ENCODE measurements at regions of chr3 and their contacts with region 1.

Region 1: DNA sequence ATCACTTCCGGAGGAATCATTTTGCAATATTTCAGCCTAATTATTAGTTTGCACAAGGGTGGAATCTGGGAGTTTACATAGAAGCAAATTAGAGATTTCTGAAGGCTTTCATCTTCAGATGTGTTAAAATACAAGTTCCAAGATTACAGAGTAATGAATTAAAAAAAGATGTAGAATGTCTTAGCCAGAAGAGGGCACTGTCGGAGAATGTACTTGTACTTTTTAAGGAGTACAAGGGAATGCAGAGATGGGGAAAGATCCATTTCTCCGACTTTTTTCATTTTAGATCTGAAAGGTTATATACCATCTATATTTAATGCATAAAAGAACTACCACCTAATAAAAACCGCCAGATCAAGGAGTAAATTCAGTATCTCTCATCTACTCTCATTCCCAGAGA is 43.1 kb upstream of the WDR5B start:
- DNase-seq: peak; percentile 61
- H3K4me3 ChIP-seq: no peak overlapping the region
- CTCF ChIP-seq: peak; percentile 40

Region 2: DNA sequence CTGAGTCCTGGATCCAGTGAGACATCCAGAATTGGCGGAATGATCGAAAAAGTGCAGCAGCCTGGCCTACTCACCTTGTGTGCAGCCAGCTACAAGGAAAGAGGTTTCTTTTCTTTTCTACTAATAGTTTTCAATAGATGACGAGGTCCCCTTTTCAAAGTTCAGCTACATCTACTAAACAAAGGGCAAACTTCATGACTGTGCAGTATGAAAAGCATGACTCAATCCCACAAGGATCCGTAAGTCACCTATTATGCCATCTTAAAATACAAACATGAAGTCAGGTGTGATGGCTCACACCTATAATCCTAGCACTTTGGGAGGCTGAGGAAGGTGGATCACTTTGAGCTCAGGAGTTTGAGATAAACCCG is 92.6 kb before region 1 on chr3:
- in situ Hi-C with region 1: no loop called
- DNase-seq: no peak
- H3K4me3 ChIP-seq: no peak overlapping the region
- CTCF ChIP-seq: no peak

Region 3: GRCh38 chr3:122392868-122393844 is 65.8 kb before region 1 on chr3:
- in situ Hi-C with region 1: no loop called
- DNase-seq: peak; percentile 32
- H3K4me3 ChIP-seq: no peak overlapping the region
- CTCF ChIP-seq: peak; percentile 70

Region 4: DNA sequence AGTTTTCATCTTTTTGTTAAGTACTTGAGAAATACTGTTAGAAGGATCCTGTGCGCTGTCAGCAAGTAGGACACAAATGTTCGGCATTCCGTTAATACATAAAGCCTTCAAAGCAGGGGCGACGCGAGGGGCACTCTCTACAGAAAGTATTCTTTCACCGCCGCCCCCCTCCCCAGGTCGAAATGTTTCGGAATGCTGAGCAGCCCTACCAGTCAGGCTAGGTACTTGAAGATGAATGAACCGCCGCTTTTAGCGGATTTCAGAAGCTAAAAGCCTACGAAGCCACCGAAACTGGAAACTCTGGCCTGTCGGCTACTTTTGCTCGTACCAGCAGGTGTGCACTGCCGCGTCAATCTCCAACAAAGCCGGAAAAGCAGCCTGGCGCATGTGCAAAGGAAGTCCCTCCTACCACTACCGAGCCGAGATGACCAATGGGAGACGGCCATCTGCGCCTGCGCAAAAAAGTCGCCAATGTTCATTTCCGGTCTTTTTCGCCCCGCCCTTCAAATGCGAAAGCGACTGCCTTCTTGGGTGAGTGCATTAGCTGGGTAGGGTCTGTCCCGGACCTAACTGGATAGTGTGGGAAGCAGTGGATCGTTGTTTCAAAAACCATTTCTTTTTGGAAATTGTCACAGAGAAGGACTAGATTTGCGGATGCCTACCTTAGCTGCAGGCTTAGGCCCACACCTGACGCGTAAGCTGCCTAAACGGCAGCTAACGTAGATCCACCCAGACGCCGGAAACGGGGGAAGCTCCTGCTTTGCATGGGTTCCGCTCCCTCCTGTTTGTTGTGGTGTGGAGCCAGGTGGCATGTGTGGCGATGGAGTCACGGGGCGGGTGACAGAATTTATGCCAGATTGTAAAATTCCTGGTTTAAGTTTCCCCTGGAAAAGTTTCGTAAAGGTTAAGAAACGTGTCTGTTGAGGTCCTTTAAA is 43.0 kb before region 1 on chr3 and contains the start of gene WDR5B:
- in situ Hi-C with region 1: no loop called
- DNase-seq: peak; percentile 96
- H3K4me3 ChIP-seq: peak within 1 kb of the TSS; percentile 89
- CTCF ChIP-seq: peak; percentile 13

Region 5: GRCh38 chr3:122668930-122669730 is 210.1 kb after region 1 on chr3:
- in situ Hi-C with region 1: loop called (anchors 25 kb)
- DNase-seq: peak; percentile 42
- H3K4me3 ChIP-seq: no peak overlapping the region
- CTCF ChIP-seq: no peak